K562 (cell line): ENCODE measurements at regions of chr19 and their contacts with region 1.

Region 1: GRCh38 chr19:40662921-40663694 is 27.3 kb downstream of the NUMBL start:
- DNase-seq: peak; percentile 87 to 94 (median 90)
- ATAC-seq: peak; percentile 90
- H3K4me3 ChIP-seq: peak overlapping the region; percentile 75
- H3K27ac ChIP-seq: peak overlapping the region; percentile 94
- H3K4me1 ChIP-seq: peaks cover 39 to 57% of the 10 kb centered on the region in 2 experiments
- H3K27me3 ChIP-seq: no peaks in the 10 kb centered on the region
- CTCF ChIP-seq: peak in 2 of 3 experiments; percentile 94 to 96; a peak in 3 of 6 replicates
- EP300 ChIP-seq: no peak
- POLR2A ChIP-seq: peak; percentile 49; the same call in 1 of the 2 replicates
- RAD21 ChIP-seq: peak; percentile 97 to 98

Region 2: GRCh38 chr19:40623403-40624251 is 39.5 kb before region 1 on chr19:
- CTCF ChIA-PET with region 1: no interaction called
- POLR2A ChIA-PET with region 1: no interaction called
- in situ Hi-C with region 1: no loop called
- intact Hi-C with region 1: no loop called
- DNase-seq: peak; percentile 98 to 99 (median 98)
- ATAC-seq: peak; percentile 98
- H3K4me3 ChIP-seq: no peak overlapping the region
- H3K27ac ChIP-seq: peak overlapping the region; percentile 51; the same call in 1 of the 3 replicates
- H3K4me1 ChIP-seq: peaks cover 31 to 50% of the 10 kb centered on the region in 2 experiments
- H3K27me3 ChIP-seq: no peaks in the 10 kb centered on the region
- CTCF ChIP-seq: no peak; a peak in 1 of 6 replicates
- EP300 ChIP-seq: peak; percentile 46; the same call in 1 of the 2 replicates
- POLR2A ChIP-seq: no peak
- RAD21 ChIP-seq: 0 out of 4 replicates have a peak, but pooled peaks of 1 of the 2 experiments have one; percentile 1

Region 3: DNA sequence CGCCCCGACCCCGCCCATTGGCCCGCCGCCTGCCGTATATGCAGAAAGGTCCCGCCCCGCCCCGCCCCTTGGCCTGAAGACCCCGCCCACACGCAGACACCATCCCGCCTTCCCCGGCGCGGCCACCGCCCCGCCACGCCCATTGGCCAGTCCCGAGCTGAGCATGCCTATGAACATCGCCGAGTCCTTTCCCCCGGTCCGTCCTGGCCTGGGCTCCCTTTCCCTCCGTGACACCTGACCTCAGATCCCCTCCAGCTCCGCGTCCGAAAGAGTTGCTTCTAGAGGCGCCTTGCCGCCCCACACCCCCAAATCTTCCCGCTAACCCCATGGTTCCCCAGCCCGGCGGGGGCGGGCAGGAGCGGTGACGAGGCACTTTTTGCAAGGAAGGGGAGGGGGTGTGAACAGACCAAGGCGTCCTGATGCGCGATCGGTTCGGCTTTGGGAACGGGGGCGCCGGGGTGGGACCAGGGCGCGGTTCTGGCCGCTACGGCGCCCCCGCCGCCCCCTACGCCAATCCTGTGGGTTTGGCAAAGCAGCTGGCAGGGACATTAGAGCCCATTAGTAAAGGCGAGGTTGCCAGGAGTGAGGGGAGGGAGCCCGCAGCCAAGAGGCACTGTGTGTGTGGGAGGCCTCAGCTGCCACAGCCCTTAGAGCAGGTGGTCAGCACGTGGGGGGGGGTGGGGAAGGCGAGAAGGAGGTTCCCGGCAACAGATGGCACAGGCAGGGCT is 27.7 kb after region 1 on chr19:
- CTCF ChIA-PET with region 1: no interaction called
- POLR2A ChIA-PET with region 1: interaction called, 3 read pairs
- in situ Hi-C with region 1: no loop called
- intact Hi-C with region 1: loop called (anchors 2 kb)
- DNase-seq: peak; percentile 95 to 97 (median 96)
- ATAC-seq: peak; percentile 86
- H3K4me3 ChIP-seq: peak overlapping the region; percentile 65
- H3K27ac ChIP-seq: peak overlapping the region; percentile 97
- H3K4me1 ChIP-seq: peaks cover 39 to 56% of the 10 kb centered on the region in 2 experiments
- H3K27me3 ChIP-seq: no peaks in the 10 kb centered on the region
- CTCF ChIP-seq: no peak
- EP300 ChIP-seq: peak; percentile 34; the same call in 1 of the 2 replicates
- POLR2A ChIP-seq: peak; percentile 88
- RAD21 ChIP-seq: 0 out of 4 replicates have a peak, but pooled peaks of 1 of the 2 experiments have one; percentile 10

Region 4: DNA sequence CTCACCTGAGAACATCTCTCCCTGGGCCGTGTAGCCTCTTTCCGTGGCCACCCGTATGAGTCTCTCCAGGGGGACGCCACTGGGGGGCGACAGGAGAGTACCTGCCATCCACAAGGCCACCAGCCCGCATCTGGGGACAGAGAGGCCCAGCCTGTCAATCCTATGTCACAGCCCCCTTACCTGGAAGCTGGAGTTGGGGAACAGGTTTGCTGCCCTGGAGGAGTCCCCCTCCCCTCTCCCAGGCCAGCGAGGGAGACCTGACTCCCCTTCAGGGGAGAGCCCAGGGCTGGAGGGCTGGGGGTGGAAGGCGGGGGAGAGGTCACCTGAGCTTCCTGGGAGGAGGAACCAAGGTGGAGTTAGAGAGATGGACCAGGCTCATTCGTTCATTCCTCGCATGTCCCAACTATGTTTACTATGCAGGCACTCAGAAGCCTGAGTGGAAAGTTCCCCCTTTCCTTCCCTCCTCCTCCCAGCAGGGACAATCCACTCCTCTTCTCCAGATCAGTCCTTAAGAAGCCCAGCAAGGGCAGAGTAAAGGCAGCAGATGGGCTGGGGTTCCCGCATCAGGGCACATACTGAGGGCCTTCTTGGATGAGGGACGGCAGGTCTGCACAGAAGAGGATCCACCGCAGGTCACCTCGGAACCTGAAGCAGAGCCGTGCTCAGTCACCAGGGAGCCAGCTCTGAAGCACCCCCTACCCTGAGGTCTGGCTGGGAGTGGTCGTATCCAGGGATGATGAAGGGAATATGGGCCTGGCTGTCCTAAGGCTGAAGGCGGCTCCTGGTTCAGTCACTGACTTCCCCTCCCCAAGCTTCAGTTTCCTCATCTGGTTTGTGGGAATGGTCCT is 81.7 kb after region 1 on chr19:
- CTCF ChIA-PET with region 1: no interaction called
- POLR2A ChIA-PET with region 1: interaction called, 12 read pairs
- in situ Hi-C with region 1: no loop called
- intact Hi-C with region 1: loop called (anchors 5 kb)
- DNase-seq: peak; percentile 42 to 64 (median 56)
- ATAC-seq: peak; percentile 75
- H3K4me3 ChIP-seq: no peak overlapping the region
- H3K27ac ChIP-seq: no peak overlapping the region
- H3K4me1 ChIP-seq: peaks cover 13 to 52% of the 10 kb centered on the region in 2 experiments
- H3K27me3 ChIP-seq: no peaks in the 10 kb centered on the region
- CTCF ChIP-seq: peak; percentile 55 to 57 (median 56)
- EP300 ChIP-seq: no peak
- POLR2A ChIP-seq: no peak
- RAD21 ChIP-seq: peak in 1 of 2 experiments; percentile 54; a peak in 3 of 4 replicates

Region 5: DNA sequence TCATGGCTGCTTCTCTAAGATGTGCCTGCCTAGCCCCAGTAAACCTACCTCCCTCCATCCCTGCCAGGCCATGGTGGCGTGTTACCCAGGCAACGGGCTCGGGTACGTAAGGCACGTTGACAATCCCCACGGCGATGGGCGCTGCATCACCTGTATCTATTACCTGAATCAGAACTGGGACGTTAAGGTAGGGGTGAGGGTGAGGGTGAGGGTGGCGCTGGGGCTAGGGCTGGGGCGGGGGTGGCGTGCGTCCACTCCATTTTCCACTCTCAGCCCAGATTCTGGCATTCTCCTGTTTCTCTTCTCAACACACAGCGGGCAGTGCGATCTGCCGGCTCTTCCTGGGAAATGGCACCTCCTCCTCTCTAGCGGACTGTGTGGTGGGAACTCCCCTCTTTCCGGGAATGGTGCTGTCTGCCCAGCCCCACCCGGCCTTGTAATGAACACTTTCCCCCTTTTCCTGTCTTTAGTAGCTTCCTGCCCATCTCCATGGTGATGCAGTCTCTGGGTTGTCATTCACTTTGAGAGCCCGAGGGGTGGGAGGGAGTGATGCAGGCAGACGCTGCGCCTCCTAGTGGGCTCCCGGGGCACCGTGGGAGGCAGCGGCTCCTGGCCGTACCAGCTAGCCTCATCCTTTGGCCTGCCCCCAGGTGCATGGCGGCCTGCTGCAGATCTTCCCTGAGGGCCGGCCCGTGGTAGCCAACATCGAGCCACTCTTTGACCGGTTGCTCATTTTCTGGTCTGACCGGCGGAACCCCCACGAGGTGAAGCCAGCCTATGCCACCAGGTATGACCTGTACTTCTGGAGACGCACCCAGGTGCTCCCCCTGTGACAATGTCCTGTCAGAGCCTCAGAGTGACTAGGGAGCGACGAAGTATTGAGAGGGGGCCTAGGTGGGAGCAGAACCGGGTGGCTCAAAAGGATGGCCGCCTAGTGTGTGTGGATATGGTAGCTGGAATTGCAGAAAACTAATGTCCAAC is 143.7 kb after region 1 on chr19:
- CTCF ChIA-PET with region 1: no interaction called
- POLR2A ChIA-PET with region 1: interaction called, 13 read pairs
- in situ Hi-C with region 1: no loop called
- intact Hi-C with region 1: loop called (anchors 5 kb)
- DNase-seq: peak; percentile 75 to 87 (median 80)
- ATAC-seq: peak; percentile 68
- H3K4me3 ChIP-seq: no peak overlapping the region
- H3K27ac ChIP-seq: no peak overlapping the region
- H3K4me1 ChIP-seq: peaks cover 39 to 82% of the 10 kb centered on the region in 2 experiments
- H3K27me3 ChIP-seq: no peaks in the 10 kb centered on the region
- CTCF ChIP-seq: peak; percentile 82 to 91 (median 85)
- EP300 ChIP-seq: no peak
- POLR2A ChIP-seq: no peak; the same call in 1 of the 2 replicates
- RAD21 ChIP-seq: peak; percentile 41 to 59

Region 6: DNA sequence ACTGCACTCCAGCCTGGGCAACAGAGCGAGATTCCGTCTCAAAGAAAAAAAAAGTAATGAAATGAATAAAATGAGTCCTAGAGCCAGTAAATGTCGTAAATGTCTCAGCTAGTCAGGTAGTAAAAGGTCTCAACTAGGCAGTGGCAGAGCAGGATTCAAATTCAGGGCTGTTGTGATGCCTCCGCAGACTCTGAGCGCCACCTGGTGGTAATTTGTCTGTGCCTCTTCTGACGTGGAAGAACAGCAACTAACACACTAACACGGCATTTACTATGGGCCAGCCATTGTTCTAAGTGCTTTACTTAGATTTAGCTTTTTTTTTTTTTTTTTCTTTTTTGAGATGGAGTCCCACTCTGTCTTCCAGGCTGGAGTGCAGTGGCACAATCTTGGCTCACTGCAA is 481.3 kb after region 1 on chr19:
- CTCF ChIA-PET with region 1: interaction called, 17 read pairs
- POLR2A ChIA-PET with region 1: no interaction called
- in situ Hi-C with region 1: loop called (anchors 5 kb)
- intact Hi-C with region 1: loop called (anchors 1 kb)
- DNase-seq: peak; percentile 60 to 87 (median 64)
- ATAC-seq: peak; percentile 95
- H3K4me3 ChIP-seq: no peak overlapping the region
- H3K27ac ChIP-seq: no peak overlapping the region
- H3K4me1 ChIP-seq: no peaks in the 10 kb centered on the region; a peak in 1 of 5 replicates
- H3K27me3 ChIP-seq: peaks cover 0 to 8% of the 10 kb centered on the region in 2 experiments; a peak in 1 of 5 replicates
- CTCF ChIP-seq: peak; percentile 83 to 95 (median 90)
- EP300 ChIP-seq: no peak
- POLR2A ChIP-seq: no peak
- RAD21 ChIP-seq: peak; percentile 82 to 96